GM12878 (cell line): ENCODE measurements at regions of chr4 and their contacts with region 1.

Region 1: DNA sequence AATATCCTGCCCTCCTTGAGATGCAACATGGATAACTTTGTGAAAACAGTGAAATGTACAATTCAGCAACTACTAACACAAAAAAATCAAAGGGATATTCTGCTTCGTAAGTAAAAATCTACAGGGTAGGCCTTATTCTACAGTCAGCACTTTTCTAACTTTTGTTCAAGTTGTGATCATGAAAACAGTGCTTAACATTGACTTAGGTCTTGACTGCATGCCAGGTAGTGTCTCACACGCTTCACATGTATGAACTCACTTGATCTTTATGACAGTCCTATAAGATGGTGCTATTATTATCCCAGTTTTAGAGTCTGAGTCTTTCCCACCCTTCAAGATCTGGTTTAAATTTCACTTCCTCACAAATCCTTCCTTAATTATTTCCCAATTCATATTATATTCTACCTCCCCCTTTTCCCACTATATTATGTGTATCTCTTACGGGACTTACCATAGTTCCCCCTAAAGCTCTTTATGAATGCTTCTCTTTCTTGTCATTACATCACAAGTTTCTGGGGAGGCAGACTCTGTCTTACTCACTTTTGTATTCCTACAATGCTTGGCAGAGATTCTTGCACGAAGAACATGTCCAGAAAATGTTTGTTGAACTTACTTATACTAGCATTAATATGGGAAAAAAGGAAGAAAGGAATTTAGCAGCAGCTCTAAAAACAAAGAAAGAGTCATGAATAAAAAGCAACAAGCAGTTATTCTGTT is 179.8 kb downstream of the SCFD2 start:
- DNase-seq: no peak
- ATAC-seq: no peak
- H3K4me3 ChIP-seq: no peak overlapping the region
- H3K27ac ChIP-seq: no peak overlapping the region
- H3K4me1 ChIP-seq: no peaks in the 10 kb centered on the region
- H3K27me3 ChIP-seq: no peaks in the 10 kb centered on the region
- CTCF ChIP-seq: no peak
- EP300 ChIP-seq: no peak
- POLR2A ChIP-seq: no peak
- RAD21 ChIP-seq: no peak

Region 2: DNA sequence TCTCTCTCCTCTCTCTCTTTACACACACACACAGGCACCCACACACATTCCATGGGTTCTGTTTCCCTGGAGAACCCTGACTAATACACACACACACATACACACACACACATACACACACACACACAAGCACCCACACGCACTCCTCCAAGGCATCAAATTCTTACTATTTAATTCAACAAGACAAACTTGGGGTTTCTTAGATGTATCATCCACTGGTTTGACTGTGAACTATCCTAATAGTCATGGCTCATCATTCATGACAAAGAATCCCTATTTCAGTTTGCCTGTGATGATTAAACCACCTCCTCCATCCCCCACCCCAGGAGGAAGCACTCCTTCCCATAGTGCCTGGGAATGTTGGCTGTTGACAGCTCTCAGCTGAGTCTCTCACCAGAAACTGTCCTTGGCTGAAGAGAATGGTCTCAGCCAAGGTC is 625.2 kb before region 1 on chr4:
- CTCF ChIA-PET with region 1: no interaction called
- POLR2A ChIA-PET with region 1: no interaction called
- RAD21 ChIA-PET with region 1: no interaction called
- SMC1A ChIA-PET with region 1: no interaction called
- in situ Hi-C with region 1: no loop called
- intact Hi-C with region 1: no loop called
- DNase-seq: no peak
- ATAC-seq: no peak
- H3K4me3 ChIP-seq: no peak overlapping the region
- H3K27ac ChIP-seq: no peak overlapping the region
- H3K4me1 ChIP-seq: no peaks in the 10 kb centered on the region
- H3K27me3 ChIP-seq: no peaks in the 10 kb centered on the region
- CTCF ChIP-seq: no peak
- EP300 ChIP-seq: no peak
- POLR2A ChIP-seq: no peak
- RAD21 ChIP-seq: no peak

Region 3: DNA sequence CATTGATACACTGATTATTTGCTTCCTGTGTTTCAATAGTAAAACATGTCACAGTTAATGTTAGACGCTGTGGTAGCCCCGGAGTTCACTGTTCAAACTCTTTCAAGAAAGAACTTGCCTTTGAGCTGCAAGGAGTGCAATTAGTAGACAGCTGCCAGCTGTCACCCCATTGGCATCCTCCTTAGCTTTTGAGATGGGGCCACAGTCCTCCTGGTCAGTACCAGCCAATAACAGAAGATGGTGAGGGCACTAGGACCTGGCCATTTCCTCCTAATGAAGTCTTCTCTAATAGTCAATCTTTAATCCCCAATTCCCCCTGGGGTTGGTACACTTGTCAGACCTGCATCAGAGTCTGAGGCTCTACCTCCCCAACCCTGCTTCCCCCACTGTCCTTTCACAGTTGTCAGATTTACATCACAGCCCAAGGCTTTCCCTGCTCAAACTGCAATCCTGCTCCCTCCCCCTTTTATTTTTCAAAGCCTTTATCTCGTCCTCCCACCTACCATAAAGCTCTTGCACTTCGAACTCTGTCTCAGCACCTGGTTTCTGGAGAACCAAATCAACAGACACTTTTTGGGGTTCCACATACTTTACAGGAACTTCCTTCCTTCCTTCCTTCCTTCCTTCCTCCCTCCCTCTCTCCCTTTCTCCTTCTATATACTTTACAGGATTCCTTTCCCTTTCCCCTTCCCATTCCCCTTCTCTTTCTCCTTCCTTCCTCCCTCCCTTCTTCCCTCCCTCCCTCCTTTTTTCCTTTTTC is 142.0 kb before region 1 on chr4:
- CTCF ChIA-PET with region 1: no interaction called
- POLR2A ChIA-PET with region 1: interaction called, 10 read pairs
- RAD21 ChIA-PET with region 1: no interaction called
- SMC1A ChIA-PET with region 1: no interaction called
- in situ Hi-C with region 1: no loop called
- intact Hi-C with region 1: no loop called
- DNase-seq: no peak
- ATAC-seq: peak; percentile 46; the same call in 2 of the 3 replicates
- H3K4me3 ChIP-seq: no peak overlapping the region
- H3K27ac ChIP-seq: no peak overlapping the region
- H3K4me1 ChIP-seq: no peaks in the 10 kb centered on the region
- H3K27me3 ChIP-seq: no peaks in the 10 kb centered on the region
- CTCF ChIP-seq: no peak
- EP300 ChIP-seq: no peak
- POLR2A ChIP-seq: no peak
- RAD21 ChIP-seq: no peak

Region 4: GRCh38 chr4:53150631-53151488 is 35.2 kb before region 1 on chr4:
- CTCF ChIA-PET with region 1: no interaction called
- POLR2A ChIA-PET with region 1: no interaction called
- RAD21 ChIA-PET with region 1: no interaction called
- SMC1A ChIA-PET with region 1: no interaction called
- in situ Hi-C with region 1: no loop called
- intact Hi-C with region 1: no loop called
- DNase-seq: no peak
- ATAC-seq: no peak
- H3K4me3 ChIP-seq: no peak overlapping the region
- H3K27ac ChIP-seq: no peak overlapping the region
- H3K4me1 ChIP-seq: no peaks in the 10 kb centered on the region
- H3K27me3 ChIP-seq: no peaks in the 10 kb centered on the region
- CTCF ChIP-seq: no peak
- EP300 ChIP-seq: no peak
- POLR2A ChIP-seq: no peak
- RAD21 ChIP-seq: no peak